Common myeloid progenitor, CD34-positive (primary cell): ENCODE measurements at regions of chr2 and their contacts with region 1.

Region 1: DNA sequence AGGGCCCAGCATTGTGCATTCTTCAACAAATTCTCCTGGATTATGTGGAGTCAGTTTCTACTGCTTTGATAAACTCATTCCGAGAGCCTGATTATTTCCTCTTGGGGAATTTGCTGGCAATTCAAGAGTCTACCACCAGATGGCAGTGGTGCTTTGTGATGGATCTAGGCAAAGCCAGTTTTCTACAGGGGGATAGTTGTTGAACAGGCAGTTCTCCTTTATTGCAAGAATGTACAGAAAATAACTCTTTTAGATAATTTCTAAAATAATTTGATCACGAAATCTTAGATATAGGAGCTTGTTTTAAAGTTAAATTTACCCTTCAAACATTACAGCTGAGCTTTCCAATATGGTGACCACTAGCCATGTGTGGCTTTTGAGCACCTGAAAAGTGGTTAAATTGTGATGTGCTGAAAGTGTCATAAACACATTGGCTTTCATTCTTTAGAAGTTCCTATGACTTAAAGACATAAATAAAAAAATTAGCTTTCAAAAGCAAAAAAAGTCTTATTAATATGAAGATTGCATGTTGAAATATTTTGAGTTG is 66.7 kb upstream of the HAAO start:
- DNase-seq: peak; percentile 84 to 93 (median 89)
- H3K4me3 ChIP-seq: no peak overlapping the region
- H3K27ac ChIP-seq: no peak overlapping the region
- H3K4me1 ChIP-seq: peaks cover 2 to 57% (median 45%) of the 10 kb centered on the region in 4 experiments
- H3K27me3 ChIP-seq: no peaks in the 10 kb centered on the region

Region 2: DNA sequence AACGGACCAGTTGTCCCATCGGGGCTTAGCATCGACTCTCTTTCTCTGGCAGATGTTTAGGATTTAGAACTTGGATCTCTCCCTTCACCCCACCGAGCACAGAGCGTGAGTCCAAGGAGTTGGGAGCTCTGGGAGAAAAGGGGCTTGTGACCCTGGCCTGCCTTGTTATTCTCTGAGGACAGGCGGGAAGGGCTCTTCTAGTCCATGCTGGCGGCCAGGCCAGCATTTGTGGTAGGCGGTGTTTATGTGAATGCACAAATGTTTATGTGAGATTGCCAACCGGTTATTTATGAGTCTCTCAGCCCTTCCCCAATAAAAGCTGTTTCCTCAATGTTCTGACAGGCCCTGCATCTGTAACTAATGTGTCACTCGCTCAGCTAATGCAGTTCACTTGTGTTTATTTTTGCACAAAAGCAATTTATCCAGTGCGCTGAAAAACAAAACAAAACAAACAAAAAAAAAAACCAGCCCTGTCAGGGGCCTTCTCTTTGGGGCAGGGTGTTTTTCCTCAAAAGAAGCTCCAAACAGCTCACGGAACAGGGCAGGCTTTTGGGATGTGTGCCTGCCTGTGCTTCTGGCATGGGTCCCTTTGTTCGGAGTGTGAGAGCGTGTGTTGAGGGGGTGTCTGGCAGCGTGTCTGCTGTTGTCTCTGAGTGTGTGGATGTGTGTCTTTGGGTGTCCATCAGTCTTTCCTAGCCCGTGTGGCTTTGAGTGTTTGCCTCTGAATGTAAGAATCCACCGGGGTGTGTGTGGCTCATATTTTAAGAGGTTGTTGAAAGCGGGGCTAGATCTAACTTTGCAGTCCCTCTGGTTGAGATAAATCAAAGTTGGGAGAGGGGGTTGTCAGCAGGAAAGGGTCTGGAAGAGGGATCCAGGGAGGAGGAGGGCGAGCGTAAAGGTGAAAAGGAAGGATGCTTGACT is 13.9 kb before region 1 on chr2:
- CTCF ChIA-PET with region 1: interaction called, 45 read pairs
- POLR2A ChIA-PET with region 1: interaction called, 5 read pairs
- DNase-seq: peak in 2 of 3 donors; percentile 75 to 86
- H3K4me3 ChIP-seq: peak overlapping the region in 1 of 7 experiments; percentile 16
- H3K27ac ChIP-seq: no peak overlapping the region
- H3K4me1 ChIP-seq: peaks cover 0 to 23% (median 18%) of the 10 kb centered on the region in 4 experiments
- H3K27me3 ChIP-seq: no peaks in the 10 kb centered on the region

Region 3: GRCh38 chr2:42901076-42901640 is 42.1 kb after region 1 on chr2:
- CTCF ChIA-PET with region 1: interaction called, 11 read pairs
- POLR2A ChIA-PET with region 1: no interaction called
- DNase-seq: no peak
- H3K4me3 ChIP-seq: no peak overlapping the region
- H3K27ac ChIP-seq: no peak overlapping the region
- H3K4me1 ChIP-seq: peaks cover 0 to 54% (median 28%) of the 10 kb centered on the region in 4 experiments
- H3K27me3 ChIP-seq: no peaks in the 10 kb centered on the region

Region 4: GRCh38 chr2:43484323-43484930 is 625.3 kb after region 1 on chr2:
- CTCF ChIA-PET with region 1: interaction called, 39 read pairs
- POLR2A ChIA-PET with region 1: no interaction called
- DNase-seq: peak; percentile 89 to 92 (median 91)
- H3K4me3 ChIP-seq: no peak overlapping the region
- H3K27ac ChIP-seq: no peak overlapping the region
- H3K4me1 ChIP-seq: peaks cover 8 to 29% (median 12%) of the 10 kb centered on the region in 4 experiments
- H3K27me3 ChIP-seq: no peaks in the 10 kb centered on the region